AG04449 (cell line): ENCODE measurements at regions of chr6 and their contacts with region 1.

Region 1: DNA sequence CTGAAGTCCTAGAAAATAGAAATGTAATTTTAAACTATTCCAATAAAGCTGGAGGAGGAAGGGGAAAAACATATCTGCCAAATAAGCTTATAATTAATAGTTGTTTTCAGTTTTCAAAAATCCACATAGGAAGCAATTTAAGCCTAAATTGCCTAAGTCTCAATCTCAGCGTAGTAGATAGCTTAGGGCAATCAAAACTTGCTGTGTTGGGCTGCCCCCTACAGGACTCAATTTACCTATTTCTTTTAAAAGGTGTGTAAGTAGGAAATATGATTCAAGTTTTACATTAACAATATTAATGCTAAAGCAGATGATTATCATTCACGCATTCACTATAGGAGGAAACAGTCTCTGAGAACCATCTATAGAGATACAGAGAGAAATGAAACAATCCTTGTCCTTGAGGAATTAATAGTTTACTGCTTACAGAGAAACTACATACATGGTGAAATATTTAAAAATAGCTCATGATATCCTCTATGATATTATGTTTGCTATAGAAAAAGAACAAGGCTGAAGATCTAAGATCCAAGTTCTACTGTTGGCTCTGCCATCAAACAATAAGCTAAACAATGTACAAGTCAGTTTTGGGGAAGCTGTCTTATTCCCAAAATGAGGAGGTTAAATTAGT is 102.1 kb downstream of the ATG5 start:
- DNase-seq: peak; percentile 37
- H3K4me3 ChIP-seq: no peak overlapping the region
- CTCF ChIP-seq: peak; percentile 47

Region 2: DNA sequence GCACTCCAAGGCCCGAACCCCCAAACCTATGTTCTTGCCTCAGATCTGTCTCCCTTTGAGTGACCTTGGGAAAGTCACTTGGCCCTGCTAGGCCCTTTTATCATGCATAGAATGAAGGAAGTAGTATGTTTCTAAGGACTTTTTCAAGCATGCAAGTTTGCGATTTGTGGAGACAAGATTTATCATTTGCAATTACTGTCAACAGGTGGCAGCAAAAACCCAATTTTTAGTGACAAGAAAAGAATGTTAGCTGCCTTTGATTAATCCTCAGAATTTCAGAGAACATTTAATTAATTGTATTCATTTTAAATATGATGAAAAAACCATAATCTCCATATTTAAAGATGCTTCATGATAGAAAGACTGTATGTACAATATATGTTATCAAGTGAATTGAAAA is 792.2 kb before region 1 on chr6:
- CTCF ChIA-PET with region 1: interaction called, 46 read pairs
- POLR2A ChIA-PET with region 1: no interaction called
- DNase-seq: no peak
- H3K4me3 ChIP-seq: no peak overlapping the region
- CTCF ChIP-seq: peak; percentile 25

Region 3: DNA sequence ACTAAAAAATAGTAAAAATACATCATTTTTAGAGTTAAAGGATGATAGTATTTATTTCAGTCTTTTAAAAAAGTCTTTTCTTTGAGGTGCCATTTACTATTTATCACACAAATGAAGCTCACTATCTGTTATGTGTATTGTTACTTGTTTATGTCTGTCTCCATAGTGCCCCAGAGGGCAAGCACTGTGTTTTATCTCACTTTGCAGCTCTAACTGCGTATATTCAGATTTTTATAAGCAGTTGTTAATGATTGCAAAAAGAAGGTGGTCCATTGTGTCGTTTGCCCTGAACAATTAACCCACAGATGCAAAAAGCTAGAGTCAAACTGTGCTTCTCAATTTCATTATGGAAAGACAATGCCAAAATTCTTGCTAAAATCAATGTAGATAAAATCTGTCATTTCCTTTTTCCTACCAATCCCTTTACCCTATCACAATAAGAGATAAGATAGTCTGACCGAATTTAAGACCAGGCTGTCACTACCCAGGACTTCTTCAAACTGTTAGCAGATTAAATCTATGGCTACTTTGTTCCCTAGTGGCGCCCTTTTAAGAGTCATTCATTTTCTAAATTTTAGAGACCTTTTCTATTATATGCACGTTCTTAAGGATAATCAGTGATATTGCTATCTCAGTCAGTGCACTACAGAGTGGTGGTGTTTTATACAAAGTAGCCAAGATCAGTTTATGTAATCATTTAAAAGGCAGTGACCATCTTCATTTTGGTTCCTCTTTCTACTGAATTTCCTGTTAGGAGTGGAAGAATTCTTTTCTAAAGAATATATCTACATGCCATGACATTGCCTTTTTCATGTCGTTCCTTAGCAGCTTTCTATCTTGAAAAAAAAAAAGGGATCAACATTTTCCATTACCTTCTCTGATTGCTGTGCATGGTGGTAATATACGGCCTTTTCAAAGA is 270.4 kb before region 1 on chr6:
- CTCF ChIA-PET with region 1: no interaction called
- POLR2A ChIA-PET with region 1: no interaction called
- DNase-seq: no peak
- H3K4me3 ChIP-seq: no peak overlapping the region
- CTCF ChIP-seq: no peak

Region 4: GRCh38 chr6:106085984-106086813 is 137.2 kb before region 1 on chr6 and contains the start of gene PRDM1:
- CTCF ChIA-PET with region 1: interaction called, 111 read pairs
- POLR2A ChIA-PET with region 1: no interaction called
- DNase-seq: no peak
- H3K4me3 ChIP-seq: peak within 1 kb of the TSS; percentile 68
- CTCF ChIP-seq: no peak

Region 5: DNA sequence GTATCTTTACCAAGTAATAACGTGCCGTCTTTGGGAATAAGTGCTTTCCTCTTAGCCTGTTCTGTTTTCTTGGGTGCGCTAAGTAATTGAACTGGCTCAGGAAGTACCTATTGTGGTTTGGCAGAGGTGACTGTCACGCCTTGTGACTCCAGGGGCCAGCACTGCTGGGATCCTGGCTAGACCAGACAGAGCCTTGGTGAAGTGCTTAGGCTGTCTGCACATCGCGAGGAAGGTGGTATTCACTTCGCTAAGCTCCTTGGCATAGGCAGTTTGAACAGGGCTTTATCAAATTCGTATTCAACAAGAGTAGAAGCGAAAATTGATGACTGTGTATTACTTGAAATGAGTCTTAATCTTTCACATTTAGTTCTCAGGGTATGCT is 119.7 kb before region 1 on chr6:
- CTCF ChIA-PET with region 1: interaction called, 99 read pairs
- POLR2A ChIA-PET with region 1: no interaction called
- DNase-seq: no peak
- H3K4me3 ChIP-seq: no peak overlapping the region
- CTCF ChIP-seq: no peak

Region 6: GRCh38 chr6:106206905-106207304 is 16.5 kb before region 1 on chr6:
- CTCF ChIA-PET with region 1: interaction called, 56 read pairs
- POLR2A ChIA-PET with region 1: no interaction called
- DNase-seq: no peak
- H3K4me3 ChIP-seq: no peak overlapping the region
- CTCF ChIP-seq: no peak

Region 7: GRCh38 chr6:106421496-106421895 is 198.1 kb after region 1 on chr6:
- CTCF ChIA-PET with region 1: no interaction called
- POLR2A ChIA-PET with region 1: no interaction called
- DNase-seq: no peak
- H3K4me3 ChIP-seq: no peak overlapping the region
- CTCF ChIP-seq: no peak

Region 8: GRCh38 chr6:106431972-106432371 is 208.6 kb after region 1 on chr6:
- CTCF ChIA-PET with region 1: no interaction called
- POLR2A ChIA-PET with region 1: no interaction called
- DNase-seq: no peak
- H3K4me3 ChIP-seq: no peak overlapping the region
- CTCF ChIP-seq: no peak

Region 9: DNA sequence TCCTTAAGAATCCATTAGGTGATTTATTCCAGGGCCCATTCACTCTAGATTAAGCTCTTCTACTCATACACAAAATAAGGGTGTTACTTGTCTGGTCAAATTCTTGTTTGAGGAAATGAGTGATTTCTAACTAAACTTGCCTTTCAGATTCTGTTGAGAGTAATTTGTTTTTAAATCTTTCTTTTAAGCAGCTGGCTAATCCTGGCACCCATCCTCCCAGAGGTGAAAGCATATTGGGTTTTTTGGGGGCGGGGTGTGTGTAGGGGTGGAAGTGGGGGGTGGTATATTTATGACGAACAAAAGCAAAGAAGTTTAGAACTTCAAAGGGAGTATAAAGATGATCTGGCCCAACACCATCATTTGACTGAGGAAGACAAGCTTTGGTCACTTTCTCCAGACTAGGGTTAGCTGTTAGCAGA is 311.2 kb after region 1 on chr6:
- CTCF ChIA-PET with region 1: no interaction called
- POLR2A ChIA-PET with region 1: no interaction called
- DNase-seq: no peak
- H3K4me3 ChIP-seq: no peak overlapping the region
- CTCF ChIP-seq: no peak